Posterior vena cava (tissue), 2 donors: ENCODE measurements at regions of chr11 and their contacts with region 1.

Region 1: DNA sequence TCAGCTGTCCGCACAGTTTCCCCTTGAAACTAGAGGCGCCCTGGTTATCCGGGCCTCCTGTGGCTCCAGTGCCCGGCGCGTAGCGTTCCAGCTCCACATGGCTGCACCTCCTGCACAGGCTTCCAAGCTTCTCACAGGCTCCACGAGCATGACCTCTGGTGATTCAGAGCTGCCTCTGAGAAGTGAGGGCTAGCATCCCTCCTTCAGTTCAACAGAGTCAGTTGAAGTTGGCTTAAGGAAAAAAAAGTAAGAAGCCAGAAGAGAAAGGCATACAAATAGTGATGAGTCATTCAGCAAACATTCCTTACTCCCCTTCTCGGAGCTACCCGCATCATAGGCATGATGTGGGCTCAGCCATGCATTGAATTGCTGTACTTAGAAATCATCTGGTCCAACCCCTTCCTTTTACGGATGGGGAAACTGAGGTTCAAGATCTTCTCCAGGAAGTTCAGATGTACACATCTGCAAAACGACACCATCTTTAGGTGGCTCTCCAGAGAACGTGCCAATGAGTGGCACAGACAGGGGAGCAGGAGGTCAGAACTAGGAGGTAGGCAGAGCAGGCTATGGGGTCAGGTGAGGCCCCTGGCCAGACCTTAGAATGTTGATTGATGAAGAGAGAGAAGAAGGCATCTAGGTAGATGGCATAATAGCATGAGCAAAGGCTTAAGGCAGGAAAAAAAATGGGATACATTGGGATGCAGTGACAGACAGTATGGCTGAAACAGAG is 216.3 kb upstream of the TBCEL start:
- DNase-seq: no peak

Region 2: GRCh38 chr11:120778685-120779490 is 28.7 kb before region 1 on chr11:
- intact Hi-C with region 1: loop called in 1 of 2 experiments (anchors 1 kb)
- DNase-seq: no peak

Region 3: DNA sequence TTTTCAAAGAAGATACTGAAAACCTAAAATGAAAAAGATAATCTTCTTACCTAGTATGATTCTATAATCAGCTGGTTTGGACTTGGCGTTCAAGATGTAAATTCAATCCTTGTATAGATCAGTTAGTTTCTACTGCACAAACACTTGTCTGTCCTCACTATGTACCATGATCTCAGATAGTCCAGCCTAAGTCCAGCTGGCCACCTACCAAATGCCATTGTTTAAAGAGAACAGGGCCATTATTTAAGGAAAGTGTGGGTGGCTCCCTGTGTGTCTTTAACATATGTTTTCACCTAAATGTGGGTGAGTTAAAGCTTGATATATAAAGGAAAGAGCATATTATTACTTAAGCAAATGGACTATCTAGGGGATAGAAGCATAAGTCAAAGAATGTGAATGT is 1269.9 kb after region 1 on chr11:
- intact Hi-C with region 1: loop called in 1 of 2 experiments (anchors 5 kb)
- DNase-seq: no peak